ENCODE measurements at regions of chr10 and their contacts with region 1.

Region 1: GRCh38 chr10:5788969-5789368 is 24.3 kb downstream of the GDI2 start:
- DNase-seq: no peak
- H3K4me3 ChIP-seq: no peak overlapping the region
- H3K27ac ChIP-seq: no peak overlapping the region
- H3K4me1 ChIP-seq: peaks cover 12% of the 10 kb centered on the region
- H3K27me3 ChIP-seq: no peaks in the 10 kb centered on the region
- CTCF ChIP-seq: no peak
- POLR2A ChIP-seq: no peak

Region 2: DNA sequence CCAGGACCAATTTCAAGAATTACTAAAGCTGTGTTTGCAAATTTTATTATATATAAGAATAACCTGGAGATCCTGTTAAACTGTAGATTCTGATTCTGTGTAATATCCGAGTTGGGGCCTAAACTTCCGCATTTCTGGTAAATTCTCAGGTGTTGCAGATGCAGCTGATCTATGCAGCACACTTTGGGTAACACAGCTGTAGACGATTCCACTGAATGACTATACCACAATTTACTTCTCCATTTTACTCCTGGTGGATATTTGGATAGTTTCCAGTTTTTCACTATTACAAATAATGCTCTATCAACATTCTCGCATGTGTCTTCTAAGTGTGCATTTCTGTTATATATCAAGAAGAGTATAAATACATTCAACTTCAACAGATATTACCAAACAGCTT is 16.7 kb after region 1 on chr10:
- CTCF ChIA-PET with region 1: interaction called, 4 read pairs
- POLR2A ChIA-PET with region 1: no interaction called
- dilution Hi-C with region 1: no loop called
- intact Hi-C with region 1: loop called (anchors 2 kb)
- DNase-seq: no peak
- H3K4me3 ChIP-seq: no peak overlapping the region
- H3K27ac ChIP-seq: no peak overlapping the region
- H3K4me1 ChIP-seq: peaks cover 19% of the 10 kb centered on the region
- H3K27me3 ChIP-seq: no peaks in the 10 kb centered on the region
- CTCF ChIP-seq: no peak
- POLR2A ChIP-seq: no peak

Region 3: GRCh38 chr10:5840314-5841307 is 51.6 kb after region 1 on chr10:
- CTCF ChIA-PET with region 1: no interaction called
- POLR2A ChIA-PET with region 1: no interaction called
- dilution Hi-C with region 1: no loop called
- intact Hi-C with region 1: no loop called
- DNase-seq: no peak
- H3K4me3 ChIP-seq: no peak overlapping the region
- H3K27ac ChIP-seq: no peak overlapping the region
- H3K4me1 ChIP-seq: no peaks in the 10 kb centered on the region
- H3K27me3 ChIP-seq: no peaks in the 10 kb centered on the region
- CTCF ChIP-seq: no peak
- POLR2A ChIP-seq: no peak

Region 4: GRCh38 chr10:5927306-5927705 is 138.3 kb after region 1 on chr10:
- CTCF ChIA-PET with region 1: no interaction called
- POLR2A ChIA-PET with region 1: no interaction called
- dilution Hi-C with region 1: no loop called
- intact Hi-C with region 1: no loop called
- DNase-seq: no peak
- H3K4me3 ChIP-seq: no peak overlapping the region
- H3K27ac ChIP-seq: no peak overlapping the region
- H3K4me1 ChIP-seq: no peaks in the 10 kb centered on the region
- H3K27me3 ChIP-seq: no peaks in the 10 kb centered on the region
- CTCF ChIP-seq: no peak
- POLR2A ChIP-seq: no peak

Measured in endothelial cell of umbilical vein (primary cell).